Activated CD4-positive, alpha-beta T cell treated with anti-CD3 and anti-CD28 coated beads, Interleukin-2, amount 10 ng/mL, durations not matched to agents 24 days and 14 days (primary cell): ENCODE measurements at regions of chr4 and their contacts with region 1.

Region 1: DNA sequence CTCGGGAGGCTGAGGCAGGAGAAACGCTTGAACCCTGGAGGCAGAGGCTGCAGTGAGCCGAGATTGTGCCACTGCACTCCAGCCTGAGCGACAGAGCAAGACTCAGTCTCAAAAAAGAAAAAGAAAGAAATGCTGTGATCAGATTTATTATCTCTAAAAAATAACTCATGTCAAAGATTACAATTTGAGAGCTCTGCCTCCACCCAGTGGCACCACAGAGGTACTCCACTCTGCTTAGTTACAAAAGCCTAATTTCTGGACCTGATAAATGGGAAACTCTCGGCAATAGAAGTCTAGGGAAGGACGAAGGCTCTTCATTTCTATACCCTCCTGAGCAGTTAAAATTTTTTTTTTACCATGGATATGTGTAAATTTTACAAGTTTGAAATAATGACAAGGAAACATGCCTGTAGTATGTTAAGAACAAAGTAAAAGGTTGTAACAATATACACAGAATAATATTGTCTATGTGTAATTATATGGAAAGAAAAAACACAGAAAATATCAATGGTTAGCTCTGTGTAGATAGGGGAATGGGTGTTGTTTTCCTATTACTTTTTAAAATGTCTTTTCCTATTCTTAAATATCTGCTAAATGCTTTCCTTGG is 149.8 kb downstream of the STIM2 start:
- DNase-seq: peak; percentile 84
- H3K4me3 Mint-ChIP-seq: no peak overlapping the region
- H3K27ac Mint-ChIP-seq: no peak overlapping the region
- H3K4me1 Mint-ChIP-seq: peaks cover 9% of the 10 kb centered on the region
- H3K27me3 Mint-ChIP-seq: no peaks in the 10 kb centered on the region

Region 2: GRCh38 chr4:25993395-25994185 is 1016.8 kb before region 1 on chr4:
- intact Hi-C with region 1: loop called (anchors 1 kb)
- DNase-seq: peak; percentile 60
- H3K4me3 Mint-ChIP-seq: no peak overlapping the region
- H3K27ac Mint-ChIP-seq: no peak overlapping the region
- H3K4me1 Mint-ChIP-seq: peaks cover 13% of the 10 kb centered on the region
- H3K27me3 Mint-ChIP-seq: no peaks in the 10 kb centered on the region